ENCODE measurements at regions of chr1 and their contacts with region 1.

Region 1: GRCh38 chr1:235910357-235911299 is 43.9 kb upstream of the LYST start:
- DNase-seq: no peak
- ATAC-seq: peak; percentile 78
- H3K4me3 ChIP-seq: no peak overlapping the region
- H3K27ac ChIP-seq: no peak overlapping the region
- H3K4me1 ChIP-seq: peaks cover 4% of the 10 kb centered on the region; the same call in 1 of the 2 replicates
- H3K27me3 ChIP-seq: no peaks in the 10 kb centered on the region
- CTCF ChIP-seq: no peak
- EP300 ChIP-seq: no peak; a peak in 1 of 4 replicates
- POLR2A ChIP-seq: no peak
- RAD21 ChIP-seq: no peak

Region 2: DNA sequence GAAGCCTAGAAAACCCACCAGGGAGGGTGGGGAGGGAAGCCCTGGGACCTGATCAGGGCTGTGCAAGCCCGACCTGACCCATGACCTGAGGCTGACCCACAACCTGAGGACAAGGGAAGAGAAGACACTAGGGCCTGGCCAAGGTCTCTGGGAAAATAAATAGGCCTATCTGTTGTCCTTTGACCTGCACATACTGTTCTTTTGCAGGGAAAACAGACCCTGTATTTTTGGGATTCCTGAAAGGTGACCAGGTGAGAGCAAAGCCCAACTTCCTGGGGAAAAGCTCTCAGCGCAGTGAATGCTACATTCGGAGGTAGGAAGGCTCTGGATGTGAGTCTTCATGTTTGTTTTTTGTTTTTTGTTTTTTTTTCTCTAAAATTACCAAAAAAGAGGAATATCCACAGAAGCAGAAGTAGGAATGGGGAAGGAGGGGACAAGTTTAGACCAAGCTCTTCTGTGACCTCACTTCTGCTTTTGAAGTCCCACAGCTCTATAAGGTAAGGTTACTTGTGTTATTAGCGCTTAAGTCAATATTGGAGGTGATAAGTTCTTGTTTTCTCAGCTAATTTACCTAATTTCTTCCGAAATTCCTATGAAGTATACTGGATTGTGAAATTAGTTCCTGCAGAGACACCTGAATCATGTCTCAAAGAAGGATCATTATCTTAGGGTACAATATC is 17.8 kb before region 1 on chr1:
- CTCF ChIA-PET with region 1: interaction called, 8 read pairs
- POLR2A ChIA-PET with region 1: interaction called, 5 read pairs
- RAD21 ChIA-PET with region 1: interaction called, 4 read pairs
- SMC1A ChIA-PET with region 1: interaction called, 11 read pairs
- in situ Hi-C with region 1: no loop called
- intact Hi-C with region 1: no loop called
- DNase-seq: no peak
- ATAC-seq: 0 out of 3 replicates have a peak, but pooled peaks have one; percentile 19
- H3K4me3 ChIP-seq: 0 out of 2 replicates have a peak overlapping the region, but pooled peaks have one; percentile 4
- H3K27ac ChIP-seq: peak overlapping the region; percentile 54; the same call in 1 of the 2 replicates
- H3K4me1 ChIP-seq: peaks cover 18% of the 10 kb centered on the region
- H3K27me3 ChIP-seq: no peaks in the 10 kb centered on the region
- CTCF ChIP-seq: no peak
- EP300 ChIP-seq: no peak
- POLR2A ChIP-seq: no peak
- RAD21 ChIP-seq: no peak

Region 3: DNA sequence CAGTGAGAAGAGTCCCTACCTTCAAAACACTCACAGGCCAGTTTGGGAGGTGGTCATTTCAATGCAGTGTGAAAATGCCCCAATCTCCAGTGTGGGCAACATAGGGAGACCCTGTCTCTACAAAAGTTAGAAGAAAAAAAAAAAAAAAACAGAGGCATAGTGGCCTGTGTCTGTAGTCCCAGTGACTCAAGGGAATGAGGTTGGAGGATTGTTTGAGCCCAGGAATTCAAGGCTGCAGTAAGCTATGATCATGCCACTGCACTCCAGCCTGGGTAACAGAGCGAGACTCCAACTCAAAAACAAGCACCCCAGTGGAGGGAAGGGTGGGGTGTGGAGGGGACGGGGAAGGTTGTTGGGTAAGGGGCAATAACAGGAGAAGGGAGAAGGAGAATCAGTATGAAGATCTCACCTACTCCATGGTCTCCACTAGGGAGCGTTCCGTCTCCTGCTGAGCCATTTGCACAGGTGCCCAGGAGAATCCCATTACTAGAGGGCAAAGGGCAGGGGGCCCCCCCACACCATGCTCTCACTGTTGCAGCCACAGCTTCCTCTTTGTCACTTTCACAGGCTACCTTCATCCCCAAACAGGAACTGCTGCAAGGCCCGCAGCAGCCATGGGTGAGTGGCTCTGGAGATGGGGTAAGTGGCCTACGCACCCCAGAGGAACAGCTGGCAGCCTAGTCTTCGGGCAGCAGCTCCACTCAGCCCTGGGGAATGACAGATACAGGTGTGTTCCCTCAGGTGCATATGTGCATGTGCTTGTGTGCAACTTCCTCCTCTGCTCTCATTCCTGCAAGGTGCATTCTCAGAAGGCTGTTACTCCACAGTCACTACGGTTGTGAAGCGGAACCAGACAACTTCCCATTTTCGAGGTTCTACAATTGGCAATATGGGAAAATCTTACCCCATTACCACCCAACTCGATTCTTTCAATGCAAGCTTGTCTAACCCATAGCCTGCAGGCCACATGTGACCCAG is 44.0 kb after region 1 on chr1:
- CTCF ChIA-PET with region 1: no interaction called
- POLR2A ChIA-PET with region 1: interaction called, 3 read pairs
- RAD21 ChIA-PET with region 1: no interaction called
- SMC1A ChIA-PET with region 1: no interaction called
- in situ Hi-C with region 1: no loop called
- intact Hi-C with region 1: loop called (anchors 5 kb)
- DNase-seq: peak; percentile 87
- ATAC-seq: peak; percentile 94
- H3K4me3 ChIP-seq: no peak overlapping the region
- H3K27ac ChIP-seq: peak overlapping the region; percentile 73
- H3K4me1 ChIP-seq: peaks cover 37% of the 10 kb centered on the region
- H3K27me3 ChIP-seq: no peaks in the 10 kb centered on the region
- CTCF ChIP-seq: peak; percentile 27 to 35 (median 33); a peak in 4 of 6 replicates
- EP300 ChIP-seq: peak; percentile 80 to 93
- POLR2A ChIP-seq: no peak
- RAD21 ChIP-seq: peak; percentile 16